ENCODE measurements at regions of chr20 and their contacts with region 1.

Region 1: DNA sequence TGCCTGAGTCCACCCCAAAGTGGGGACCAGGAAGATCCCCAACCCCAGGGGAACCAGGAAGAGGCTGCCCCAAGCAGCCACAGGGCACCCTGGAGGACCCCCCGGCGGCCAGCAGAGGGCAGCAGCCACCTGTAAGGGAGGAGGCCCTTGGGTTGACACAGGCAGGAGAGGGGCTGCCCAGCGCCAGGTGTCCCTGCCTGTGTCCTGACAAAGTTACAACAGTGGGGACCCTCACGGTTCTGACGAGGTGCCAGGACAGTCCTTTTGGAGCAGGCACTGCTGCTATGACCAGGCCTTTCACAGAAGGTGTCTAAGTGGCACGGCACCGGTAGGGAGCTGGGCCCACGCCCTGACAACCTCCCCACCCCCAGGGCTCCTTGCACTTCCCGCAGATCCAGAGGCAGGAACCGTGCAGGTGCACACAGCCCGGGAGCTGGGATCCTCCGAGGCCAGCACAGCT is 176.7 kb downstream of the BMP7 start:
- DNase-seq: peak; percentile 74
- H3K4me3 ChIP-seq: no peak overlapping the region
- H3K27ac ChIP-seq: no peak overlapping the region
- H3K4me1 ChIP-seq: peaks cover 0 to 8% (median 2%) of the 10 kb centered on the region in 4 donors
- H3K27me3 ChIP-seq: peaks cover 19% of the 10 kb centered on the region
- CTCF ChIP-seq: peak; percentile 84 to 95 (median 91)
- EP300 ChIP-seq: no peak
- POLR2A ChIP-seq: no peak

Region 2: DNA sequence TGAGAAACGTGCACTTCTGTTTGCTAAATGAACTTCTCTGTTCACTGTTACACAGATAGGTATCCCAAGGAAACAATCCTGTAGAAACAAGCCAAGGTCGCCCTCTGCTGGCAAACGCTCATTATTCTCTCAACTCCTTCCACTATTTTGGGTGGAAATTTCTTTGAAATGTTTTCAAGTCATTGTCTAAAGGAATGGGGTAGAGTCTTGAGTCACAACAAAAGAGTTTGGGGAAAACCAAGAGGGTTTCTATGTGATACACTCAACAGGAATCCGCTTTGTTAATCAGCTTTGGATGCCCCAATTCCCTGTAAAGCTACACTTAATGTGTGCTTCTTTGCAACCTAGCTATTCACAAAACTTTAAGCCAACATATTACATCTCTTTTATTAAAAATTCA is 256.8 kb after region 1 on chr20:
- in situ Hi-C with region 1: loop called (anchors 5 to 10 kb)
- intact Hi-C with region 1: no loop called
- DNase-seq: peak; percentile 77
- H3K4me3 ChIP-seq: no peak overlapping the region
- H3K27ac ChIP-seq: no peak overlapping the region
- H3K4me1 ChIP-seq: no peaks in the 10 kb centered on the region
- H3K27me3 ChIP-seq: no peaks in the 10 kb centered on the region
- CTCF ChIP-seq: peak; percentile 68 to 77 (median 74)
- EP300 ChIP-seq: no peak
- POLR2A ChIP-seq: no peak

Region 3: GRCh38 chr20:57498425-57499400 is 409.0 kb after region 1 on chr20:
- in situ Hi-C with region 1: loop called in 2 of 4 experiments (anchors 25 kb)
- intact Hi-C with region 1: no loop called
- DNase-seq: no peak
- H3K4me3 ChIP-seq: no peak overlapping the region
- H3K27ac ChIP-seq: no peak overlapping the region
- H3K4me1 ChIP-seq: peaks cover 0 to 15% (median 7%) of the 10 kb centered on the region in 4 donors
- H3K27me3 ChIP-seq: no peaks in the 10 kb centered on the region
- CTCF ChIP-seq: peak in 2 of 5 experiments; percentile 18 to 31
- EP300 ChIP-seq: no peak
- POLR2A ChIP-seq: no peak

Region 4: DNA sequence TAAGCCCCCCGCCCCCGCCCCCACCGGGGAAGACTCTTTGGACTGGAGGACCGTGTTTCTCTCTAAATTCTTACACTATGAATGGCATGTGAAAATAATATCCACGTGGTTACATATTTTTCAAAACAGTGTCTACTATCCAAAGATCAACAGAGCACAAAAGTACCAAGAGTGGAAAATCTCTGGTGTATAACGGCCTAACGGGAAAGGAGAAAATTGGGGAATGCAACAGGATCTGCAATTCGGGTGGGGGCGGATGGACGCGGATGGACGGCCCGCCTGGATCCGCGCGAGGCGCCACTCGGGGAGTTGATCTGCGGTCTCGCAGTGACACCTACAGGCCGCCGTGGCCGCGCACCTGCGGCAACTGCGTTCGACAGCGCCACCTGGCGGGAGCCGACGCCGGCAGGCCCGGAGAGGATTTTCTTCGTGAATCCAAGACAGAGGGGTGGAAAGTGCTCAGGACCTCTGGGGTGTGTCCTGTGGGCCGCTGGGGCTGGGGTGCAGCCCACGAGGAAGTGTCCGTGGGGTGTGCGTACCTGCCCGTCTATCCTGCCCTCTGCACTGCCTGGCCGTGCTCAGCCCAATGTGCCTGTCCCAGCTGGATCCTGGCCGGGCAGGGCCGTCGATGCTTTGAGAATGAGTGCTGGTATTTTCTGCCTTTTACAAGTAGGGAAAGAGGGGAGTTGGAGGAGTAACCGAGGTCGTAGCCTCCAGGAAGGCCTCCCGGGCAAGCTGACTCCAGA is 1120.1 kb after region 1 on chr20:
- in situ Hi-C with region 1: loop called in 1 of 4 experiments (anchors 25 kb)
- intact Hi-C with region 1: no loop called
- DNase-seq: peak; percentile 85
- H3K4me3 ChIP-seq: no peak overlapping the region
- H3K27ac ChIP-seq: no peak overlapping the region
- H3K4me1 ChIP-seq: peaks cover 0 to 8% (median 0%) of the 10 kb centered on the region in 4 donors
- H3K27me3 ChIP-seq: peaks cover 34% of the 10 kb centered on the region
- CTCF ChIP-seq: peak; percentile 100
- EP300 ChIP-seq: no peak
- POLR2A ChIP-seq: no peak

Measured in transverse colon (tissue), 4 donors.